ENCODE measurements at regions of chr1 and their contacts with region 1.

Region 1: GRCh38 chr1:107142140-107142542 is 1.3 kb downstream of the NTNG1 start:
- DNase-seq: no peak
- ATAC-seq: peak; percentile 29

Region 2: GRCh38 chr1:106676021-106676420 is 466.1 kb before region 1 on chr1:
- intact Hi-C with region 1: loop called in 1 of 2 experiments (anchors 5 kb)
- DNase-seq: no peak
- ATAC-seq: no peak

Region 3: DNA sequence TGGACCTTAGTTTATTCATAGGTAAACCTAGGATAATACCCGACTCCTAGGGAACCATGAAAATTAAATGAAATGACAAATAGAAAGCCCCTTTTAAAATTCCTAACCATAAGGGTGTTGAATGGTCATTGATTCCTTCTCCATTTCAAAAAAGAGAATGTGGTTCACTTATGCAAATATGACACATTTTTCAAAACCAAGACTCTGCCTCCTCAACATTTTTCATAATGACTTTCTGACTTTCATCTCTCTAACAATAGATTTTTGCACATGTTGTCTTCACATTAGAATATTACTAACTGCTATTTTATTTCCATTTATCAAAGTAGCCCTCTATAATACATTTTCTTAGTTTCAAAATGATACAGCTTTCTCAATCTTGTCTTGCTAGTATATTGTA is 167.8 kb after region 1 on chr1:
- intact Hi-C with region 1: no loop called
- DNase-seq: no peak
- ATAC-seq: no peak

Measured in left colon (tissue), 2 donors.